A673 (cell line): ENCODE measurements at regions of chr5 and their contacts with region 1.

Region 1: DNA sequence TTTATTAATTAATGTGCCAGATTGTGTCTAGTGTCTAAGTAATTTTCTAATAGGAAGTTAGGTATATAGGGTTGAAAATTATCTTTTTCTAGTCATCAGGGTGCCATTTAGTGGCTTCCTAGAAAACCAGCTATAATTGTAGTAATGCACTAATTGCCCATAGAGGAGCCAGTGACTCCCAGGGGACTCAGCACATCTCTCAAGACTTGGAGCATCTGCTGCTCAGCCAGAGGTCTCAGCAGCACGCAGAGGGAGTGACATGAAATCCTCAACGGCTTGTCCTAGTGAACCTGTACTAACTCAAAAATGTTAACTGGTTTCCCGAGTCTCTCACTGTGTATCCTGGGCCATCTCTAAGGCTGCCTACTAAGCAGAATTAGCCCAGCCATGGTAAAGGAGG is 78.2 kb upstream of the MAN2A1 start:
- DNase-seq: peak; percentile 99
- H3K4me3 ChIP-seq: no peak overlapping the region
- H3K27ac ChIP-seq: peak overlapping the region; percentile 99
- H3K4me1 ChIP-seq: peaks cover 57% of the 10 kb centered on the region
- H3K27me3 ChIP-seq: no peaks in the 10 kb centered on the region
- CTCF ChIP-seq: no peak

Region 2: GRCh38 chr5:109256486-109256885 is 355.0 kb before region 1 on chr5:
- CTCF ChIA-PET with region 1: no interaction called
- POLR2A ChIA-PET with region 1: no interaction called
- intact Hi-C with region 1: loop called (anchors 5 kb)
- DNase-seq: peak; percentile 98
- H3K4me3 ChIP-seq: no peak overlapping the region
- H3K27ac ChIP-seq: peak overlapping the region; percentile 74
- H3K4me1 ChIP-seq: peaks cover 37% of the 10 kb centered on the region
- H3K27me3 ChIP-seq: no peaks in the 10 kb centered on the region
- CTCF ChIP-seq: 0 out of 2 replicates have a peak, but pooled peaks have one; percentile 12

Region 3: DNA sequence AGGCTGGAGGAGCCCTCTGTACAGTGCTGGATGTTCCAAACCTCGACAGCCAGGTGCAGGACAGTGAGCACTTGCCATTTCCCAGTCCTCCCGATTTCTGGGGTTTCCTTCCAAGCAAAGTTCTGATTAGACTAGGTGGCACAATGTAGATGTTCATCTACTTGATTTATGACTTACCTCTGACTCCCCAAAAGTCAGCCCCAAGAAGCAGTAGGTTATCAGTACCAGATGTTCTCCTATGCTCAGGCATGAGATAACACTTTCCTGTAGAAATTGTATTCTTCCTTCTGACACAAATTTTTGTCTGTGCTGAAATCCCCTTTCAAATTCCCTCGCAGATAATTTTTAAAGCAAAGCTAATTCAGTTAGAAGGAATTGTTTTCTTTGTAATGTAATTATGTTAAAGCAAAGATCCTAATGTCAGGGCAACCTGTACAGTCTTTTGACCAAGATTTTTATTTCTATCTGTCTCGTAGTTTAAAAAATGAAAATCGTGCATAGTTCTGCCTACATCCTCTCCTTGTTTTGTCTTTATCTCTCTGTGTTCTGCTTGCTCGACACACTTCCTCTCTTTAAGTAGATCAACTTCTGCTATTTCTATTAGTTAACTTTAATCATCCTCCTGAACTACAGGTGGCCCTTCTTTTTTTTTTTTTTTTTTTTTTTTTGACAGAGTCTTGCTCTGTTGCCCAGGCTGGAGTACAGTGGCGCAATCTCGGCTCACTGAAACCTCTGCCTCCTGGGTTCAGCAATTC is 99.3 kb before region 1 on chr5:
- CTCF ChIA-PET with region 1: no interaction called
- POLR2A ChIA-PET with region 1: no interaction called
- intact Hi-C with region 1: loop called (anchors 1 kb)
- DNase-seq: no peak
- H3K4me3 ChIP-seq: no peak overlapping the region
- H3K27ac ChIP-seq: peak overlapping the region; percentile 63
- H3K4me1 ChIP-seq: peaks cover 28% of the 10 kb centered on the region
- H3K27me3 ChIP-seq: no peaks in the 10 kb centered on the region
- CTCF ChIP-seq: no peak

Region 4: GRCh38 chr5:109695005-109695926 is 83.8 kb after region 1 on chr5:
- CTCF ChIA-PET with region 1: no interaction called
- POLR2A ChIA-PET with region 1: interaction called, 10 read pairs
- intact Hi-C with region 1: no loop called
- DNase-seq: no peak
- H3K4me3 ChIP-seq: peak overlapping the region; percentile 91
- H3K27ac ChIP-seq: peak overlapping the region; percentile 3
- H3K4me1 ChIP-seq: peaks cover 60% of the 10 kb centered on the region
- H3K27me3 ChIP-seq: no peaks in the 10 kb centered on the region
- CTCF ChIP-seq: no peak

Region 5: DNA sequence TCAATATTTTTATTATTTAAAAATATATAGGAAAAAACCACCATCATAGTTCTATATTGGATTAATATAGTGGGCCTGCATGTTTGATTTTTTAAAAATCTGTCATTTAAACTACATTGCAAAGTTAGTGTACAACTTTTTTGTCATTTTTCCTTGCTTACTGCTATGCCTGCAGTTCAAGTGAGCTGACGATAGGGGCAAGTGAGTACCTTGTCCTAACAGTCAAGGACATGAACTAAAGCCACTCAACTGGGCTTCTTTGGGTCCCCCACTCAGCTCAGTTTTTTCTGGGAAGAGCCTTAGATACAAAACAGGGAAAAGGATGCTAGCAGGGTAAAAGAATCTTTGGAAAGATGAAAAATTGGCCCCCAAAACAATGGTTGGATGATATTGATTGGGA is 348.1 kb after region 1 on chr5:
- CTCF ChIA-PET with region 1: no interaction called
- POLR2A ChIA-PET with region 1: no interaction called
- intact Hi-C with region 1: loop called (anchors 1 kb)
- DNase-seq: no peak
- H3K4me3 ChIP-seq: no peak overlapping the region
- H3K27ac ChIP-seq: no peak overlapping the region
- H3K4me1 ChIP-seq: peaks cover 13% of the 10 kb centered on the region
- H3K27me3 ChIP-seq: no peaks in the 10 kb centered on the region
- CTCF ChIP-seq: peak; percentile 17; the same call in 1 of the 2 replicates